Right ventricle myocardium inferior (tissue), 1 donor: ENCODE measurements at regions of chr6 and their contacts with region 1.

Region 1: DNA sequence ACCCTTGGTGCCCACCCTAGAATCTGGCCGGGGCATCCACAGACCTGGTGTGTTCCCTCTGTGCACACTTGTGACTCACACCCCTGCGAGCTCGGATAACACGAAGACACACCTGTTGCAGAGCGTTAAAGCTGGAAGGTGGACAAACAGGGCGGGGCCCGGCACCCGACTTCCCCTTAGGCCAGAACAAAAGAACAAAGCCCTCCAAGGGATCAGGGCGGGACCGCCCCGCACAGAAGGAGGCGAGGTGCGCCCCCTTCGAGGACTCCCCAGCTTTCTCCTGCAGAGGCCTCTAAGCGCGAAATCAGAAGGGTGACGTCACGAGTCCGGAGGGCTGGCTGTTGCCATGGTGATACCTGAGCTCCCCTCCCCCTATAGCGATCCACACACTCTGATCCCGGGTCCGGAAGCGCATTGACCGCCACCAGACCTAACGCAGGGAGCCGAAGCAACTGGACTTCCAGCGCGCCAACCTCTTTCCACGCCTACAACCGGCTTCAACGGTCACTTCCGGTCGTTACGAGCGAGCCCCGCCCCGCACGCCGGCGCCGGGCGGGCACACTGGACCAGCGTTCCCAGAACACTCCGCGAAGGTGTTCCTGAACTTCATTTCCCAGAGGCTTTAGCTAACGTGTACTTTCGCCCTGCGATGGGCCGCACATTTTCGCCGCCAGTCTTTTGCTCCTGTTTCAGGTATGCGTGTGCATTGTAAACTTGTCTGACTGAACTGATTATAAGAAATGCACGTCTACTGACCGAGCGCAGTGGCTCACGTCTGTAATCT is at the start of gene ZNF184:
- DNase-seq: peak; percentile 96
- ATAC-seq: peak; percentile 100
- total RNA-seq, gene ZNF184: 4.2 TPM

Region 2: GRCh38 chr6:26537846-26538571 is 934.8 kb before region 1 on chr6 and contains the start of gene HMGN4:
- intact Hi-C with region 1: loop called (anchors 10 kb)
- DNase-seq: peak; percentile 90
- ATAC-seq: peak; percentile 89
- total RNA-seq, gene HMGN4: 29.0 TPM

Region 3: DNA sequence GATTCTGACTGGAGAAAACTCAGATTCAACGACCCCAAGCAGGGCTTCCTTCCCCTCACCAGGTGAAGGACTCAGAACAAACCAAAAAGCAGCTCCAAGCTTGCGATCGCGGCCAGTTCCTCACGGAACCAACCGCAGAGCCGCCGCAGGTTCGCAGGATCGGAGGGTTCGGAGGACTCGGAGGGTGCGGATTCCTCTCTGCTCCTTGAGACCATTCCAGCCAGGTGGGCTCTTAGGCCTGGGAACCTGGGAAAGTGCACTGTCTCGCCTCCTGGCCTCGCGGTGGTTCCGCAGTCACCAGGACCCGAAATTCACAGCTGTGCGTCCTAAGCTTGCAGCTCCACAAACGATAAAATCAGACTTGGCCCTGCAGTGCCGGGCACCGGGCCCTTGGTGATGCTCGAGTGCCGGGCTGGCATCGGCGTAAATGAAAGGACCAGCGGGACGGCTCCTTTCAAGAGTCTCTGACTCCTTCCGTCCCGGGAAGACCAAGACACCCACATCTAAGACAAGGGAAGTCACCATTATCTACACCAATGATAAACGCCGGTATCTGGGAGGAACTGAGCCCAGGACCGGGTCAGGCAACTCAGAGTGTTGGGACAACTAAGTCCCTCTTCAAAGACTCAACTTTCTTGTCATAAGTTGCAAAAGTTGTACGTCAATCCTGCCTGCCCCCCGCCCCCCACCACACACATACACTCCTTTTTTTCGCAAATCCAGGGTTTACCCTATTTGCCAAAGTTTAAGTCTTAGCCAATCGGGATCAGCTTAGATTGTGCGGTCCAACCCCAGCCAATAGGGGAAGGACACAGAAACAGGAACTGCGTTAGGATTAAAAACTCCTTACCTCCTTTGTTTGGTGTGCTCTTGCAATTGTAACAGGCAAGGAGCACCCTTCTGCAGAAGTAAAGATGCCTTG is 295.1 kb before region 1 on chr6:
- intact Hi-C with region 1: loop called (anchors 10 kb)
- DNase-seq: peak; percentile 87
- ATAC-seq: peak; percentile 81

Region 4: DNA sequence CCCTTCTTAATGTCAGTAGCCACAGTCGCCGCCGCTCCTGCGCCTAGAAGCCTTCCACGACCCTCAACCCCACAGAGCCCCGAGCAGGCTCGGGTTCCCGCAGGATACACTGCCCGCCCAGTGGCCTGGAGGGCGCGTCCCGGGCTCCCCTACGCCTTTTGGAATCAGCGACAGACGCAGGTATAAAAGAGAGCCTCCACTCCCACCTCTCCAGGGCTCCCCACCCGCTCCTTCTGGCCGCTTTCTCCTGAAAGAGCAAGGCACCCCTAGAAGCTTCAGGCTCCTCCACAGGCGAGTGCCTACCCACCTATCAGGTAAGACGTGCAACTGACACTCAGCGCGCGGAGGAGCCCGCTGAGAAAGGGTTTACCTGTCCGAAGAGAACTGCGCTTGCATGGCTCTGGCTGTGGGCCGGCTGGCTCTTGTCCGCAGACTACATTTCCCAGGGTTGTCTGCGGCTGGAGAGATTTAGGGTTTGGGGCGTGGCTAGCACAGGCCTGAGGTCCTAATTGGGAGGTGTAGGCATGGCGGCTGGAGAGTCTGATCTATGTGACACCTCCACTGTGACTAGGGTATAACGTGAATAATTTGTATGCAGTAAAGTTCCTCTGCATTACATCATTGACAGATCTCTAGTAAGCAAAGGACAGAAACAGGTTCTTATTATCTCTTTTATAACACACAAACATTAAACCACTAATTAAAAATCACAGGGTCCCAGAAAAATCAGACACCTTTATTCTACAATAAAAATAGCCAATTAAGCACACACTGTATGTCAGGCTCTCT is 97.8 kb before region 1 on chr6:
- intact Hi-C with region 1: loop called (anchors 5 kb)
- DNase-seq: peak; percentile 86
- ATAC-seq: peak; percentile 99

Region 5: DNA sequence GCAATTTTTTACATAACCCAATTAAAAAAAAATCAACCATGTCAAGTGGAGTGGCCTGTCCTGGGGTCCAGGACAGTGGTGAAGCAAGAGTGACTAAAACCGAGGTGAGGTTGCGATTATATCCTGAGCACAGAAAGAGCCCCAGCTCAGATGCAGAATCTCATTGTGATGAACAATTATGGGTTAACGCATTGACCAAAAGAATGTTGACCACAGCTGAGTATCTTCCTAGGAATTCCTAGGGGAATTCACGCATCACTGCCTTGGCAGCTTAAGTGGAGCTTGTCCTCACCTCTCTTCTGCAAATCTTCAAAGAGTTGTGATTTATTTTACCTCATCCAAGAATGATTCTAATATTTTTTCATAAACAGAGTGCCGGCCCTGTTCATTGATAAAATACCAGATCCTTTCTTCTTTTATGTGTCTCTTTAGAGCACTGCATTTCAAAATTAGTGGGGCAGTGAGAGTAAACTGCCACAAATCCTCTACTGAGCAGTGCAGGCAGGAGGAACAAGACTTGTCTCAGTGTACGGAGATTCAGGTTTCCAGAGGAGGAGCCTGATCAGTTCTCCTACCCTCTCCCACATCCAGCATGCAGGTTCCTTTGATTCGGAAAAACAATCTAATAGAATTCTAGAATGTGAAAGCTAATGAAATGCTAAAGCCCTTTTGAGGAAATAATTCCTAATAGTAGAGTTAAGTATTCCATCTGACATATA is 60.2 kb after region 1 on chr6:
- intact Hi-C with region 1: no loop called
- DNase-seq: no peak
- ATAC-seq: no peak

Region 6: DNA sequence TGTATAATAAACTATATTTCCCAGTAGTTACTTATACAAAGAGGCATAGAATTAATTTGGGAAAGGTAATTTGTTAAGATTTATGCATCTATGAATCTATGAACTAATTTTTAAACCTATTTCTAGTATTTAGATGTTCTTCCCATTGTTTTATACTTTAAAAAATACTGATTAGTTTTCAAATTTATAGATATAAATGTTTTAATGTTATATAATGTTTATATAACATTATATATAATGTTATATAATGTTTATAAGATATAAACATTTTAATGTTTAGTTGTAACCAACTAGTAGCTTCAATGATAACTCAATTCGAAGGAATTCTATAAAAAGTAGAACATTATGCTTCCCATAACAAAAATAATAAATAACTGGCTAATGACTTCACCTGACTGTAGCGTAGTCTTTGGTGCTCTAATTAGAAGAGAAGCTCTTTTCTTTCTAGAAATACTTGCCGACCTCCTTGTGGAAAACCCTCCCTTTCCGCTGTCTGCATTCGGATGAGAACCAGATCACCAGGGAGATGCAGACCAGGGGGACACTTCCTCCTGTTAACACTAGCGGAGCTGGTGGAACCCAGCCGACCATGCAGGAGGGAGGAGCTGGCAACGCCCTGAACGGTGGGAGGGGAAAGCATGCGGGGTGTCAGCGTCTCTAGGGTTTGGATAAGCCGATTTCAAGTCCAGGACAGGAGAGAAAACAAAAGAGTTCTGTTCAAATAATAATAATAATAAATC is 281.0 kb after region 1 on chr6:
- intact Hi-C with region 1: loop called (anchors 10 kb)
- DNase-seq: peak; percentile 85
- ATAC-seq: peak; percentile 53

Region 7: GRCh38 chr6:28218271-28219248 is 745.8 kb after region 1 on chr6:
- intact Hi-C with region 1: loop called (anchors 2 kb)
- DNase-seq: peak; percentile 92
- ATAC-seq: peak; percentile 95

Region 8: DNA sequence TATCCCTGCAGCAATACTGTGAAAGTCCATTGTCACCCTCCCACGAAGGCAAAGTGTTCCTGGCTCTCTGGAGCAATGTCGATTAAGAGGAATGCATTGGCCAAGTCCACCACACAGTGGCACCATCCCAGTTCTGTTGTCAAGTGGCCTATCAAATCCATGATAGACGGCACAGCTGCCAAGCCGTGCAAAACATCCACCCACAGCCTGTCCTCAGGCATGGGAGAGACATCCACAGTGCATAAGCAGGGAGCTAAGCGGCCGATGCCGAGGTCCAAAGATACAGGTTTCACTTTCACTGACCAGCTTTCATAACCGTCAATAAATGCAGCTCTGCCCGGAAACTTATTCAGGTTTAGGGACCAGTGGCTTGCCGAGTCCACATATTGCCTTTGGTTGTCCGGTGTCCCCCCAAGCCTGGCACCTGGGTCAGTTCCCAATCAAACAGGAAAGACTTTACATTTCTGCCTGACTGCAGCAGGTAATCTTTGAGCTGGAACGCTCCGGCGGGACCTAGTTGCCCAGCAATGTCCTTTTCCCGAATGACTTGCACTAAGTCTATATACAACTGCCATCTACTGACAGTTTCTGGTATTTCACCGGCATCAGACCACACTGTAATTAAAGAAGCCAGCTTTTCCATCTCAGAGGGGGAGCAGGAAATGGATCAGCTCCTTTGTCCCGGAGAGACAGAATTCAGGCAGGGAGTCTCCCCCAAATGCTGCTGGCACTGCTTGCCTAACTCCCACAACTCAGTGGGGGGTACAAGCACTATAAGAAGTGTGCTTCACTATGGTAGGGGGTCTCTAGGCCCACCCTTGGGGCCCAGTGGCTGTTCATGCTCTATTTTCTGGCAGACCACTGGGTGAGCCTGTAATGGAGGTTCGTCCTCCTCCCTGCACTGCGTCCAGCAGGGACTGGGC is 883.2 kb after region 1 on chr6:
- intact Hi-C with region 1: loop called (anchors 10 kb)
- DNase-seq: peak; percentile 84
- ATAC-seq: peak; percentile 88